Heart right ventricle (tissue), 16 donors: ENCODE measurements at regions of chr5 and their contacts with region 1.

Region 1: DNA sequence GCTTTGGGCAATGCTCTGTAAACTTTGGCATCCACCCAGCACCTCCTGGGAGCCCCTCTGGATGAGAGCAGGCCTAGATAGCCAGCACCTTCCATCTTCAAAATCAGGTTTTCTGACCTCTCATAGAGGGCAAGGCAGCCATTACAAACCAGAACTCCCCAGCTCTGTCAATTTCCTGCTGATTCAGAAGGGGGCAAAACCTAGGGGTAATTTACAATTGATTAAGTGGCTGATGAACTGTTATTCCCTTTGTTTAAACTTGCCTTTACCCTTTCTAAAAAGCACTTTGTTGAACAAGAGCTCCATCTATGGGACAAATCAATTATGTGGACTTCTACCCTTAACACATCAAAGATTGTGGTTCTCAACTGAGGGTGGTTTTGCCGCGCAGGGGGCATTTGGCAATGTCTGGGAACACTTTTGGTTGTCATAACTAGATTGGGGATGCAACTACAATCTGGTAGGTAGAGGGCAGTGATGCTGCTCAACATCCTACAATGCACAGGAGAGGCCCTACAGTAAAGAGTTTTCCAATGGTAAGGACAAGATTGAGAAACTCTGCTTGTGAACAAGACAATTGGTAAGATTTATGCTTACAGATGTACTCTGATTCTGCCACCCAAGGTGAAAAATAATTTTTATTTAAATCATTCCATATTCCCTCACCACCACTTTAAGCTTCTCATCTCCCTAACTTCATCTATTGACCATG is 184.1 kb downstream of the MARCHF11 start:
- DNase-seq: no peak
- ATAC-seq: peak; percentile 25 to 79 (median 60)
- H3K4me3 ChIP-seq: no peak overlapping the region
- H3K27ac ChIP-seq: no peak overlapping the region
- H3K4me1 ChIP-seq: peaks cover 0 to 10% (median 0%) of the 10 kb centered on the region in 9 donors
- H3K27me3 ChIP-seq: no peaks in the 10 kb centered on the region
- CTCF ChIP-seq: peak; percentile 35 to 77 (median 67)

Region 2: DNA sequence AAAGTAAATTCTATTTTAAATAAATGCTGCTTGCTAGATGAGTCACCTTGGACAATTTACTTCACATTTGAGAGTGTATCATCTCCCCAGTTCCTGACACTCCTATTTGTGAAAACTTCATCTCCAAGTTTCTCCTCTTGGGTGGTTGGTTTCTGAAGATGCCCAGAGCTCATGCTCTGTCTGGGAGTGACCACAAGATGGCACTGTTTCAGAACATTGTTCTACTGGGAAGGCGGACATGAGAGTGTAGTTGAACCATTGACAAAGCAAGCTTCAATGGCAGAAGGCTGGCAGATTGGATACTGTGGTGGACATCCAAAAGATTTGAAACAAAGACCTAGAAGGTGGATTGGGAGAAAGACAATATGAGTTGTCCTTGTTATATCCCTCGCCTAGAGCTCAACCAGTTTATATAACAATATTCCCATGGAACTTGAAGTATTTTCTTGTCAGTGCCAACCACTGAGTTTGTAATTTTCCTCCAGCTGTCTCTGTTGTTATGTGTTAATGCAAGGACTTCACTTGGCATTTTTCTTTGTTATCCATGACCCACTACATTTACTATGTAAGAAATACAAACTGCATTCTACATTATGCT is 889.6 kb before region 1 on chr5:
- intact Hi-C with region 1: loop called in 5 of 10 experiments (anchors 5 to 10 kb)
- DNase-seq: peak in 1 of 2 donors; percentile 45
- ATAC-seq: peak in 5 of 8 donors; percentile 52 to 70 (median 61)
- H3K4me3 ChIP-seq: no peak overlapping the region
- H3K27ac ChIP-seq: no peak overlapping the region
- H3K4me1 ChIP-seq: no peaks in the 10 kb centered on the region
- H3K27me3 ChIP-seq: no peaks in the 10 kb centered on the region
- CTCF ChIP-seq: peak; percentile 45 to 84 (median 75)

Region 3: GRCh38 chr5:15366676-15367391 is 628.7 kb before region 1 on chr5:
- intact Hi-C with region 1: loop called in 1 of 10 experiments (anchors 10 kb)
- DNase-seq: peak in 1 of 2 donors; percentile 18
- ATAC-seq: peak; percentile 77 to 93 (median 86)
- H3K4me3 ChIP-seq: peak overlapping the region in 4 of 10 donors; percentile 10 to 30 (median 12)
- H3K27ac ChIP-seq: peak overlapping the region in 9 of 10 donors; percentile 3 to 86 (median 60)
- H3K4me1 ChIP-seq: peaks cover 2 to 28% (median 21%) of the 10 kb centered on the region in 9 donors
- H3K27me3 ChIP-seq: no peaks in the 10 kb centered on the region
- CTCF ChIP-seq: no peak

Region 4: DNA sequence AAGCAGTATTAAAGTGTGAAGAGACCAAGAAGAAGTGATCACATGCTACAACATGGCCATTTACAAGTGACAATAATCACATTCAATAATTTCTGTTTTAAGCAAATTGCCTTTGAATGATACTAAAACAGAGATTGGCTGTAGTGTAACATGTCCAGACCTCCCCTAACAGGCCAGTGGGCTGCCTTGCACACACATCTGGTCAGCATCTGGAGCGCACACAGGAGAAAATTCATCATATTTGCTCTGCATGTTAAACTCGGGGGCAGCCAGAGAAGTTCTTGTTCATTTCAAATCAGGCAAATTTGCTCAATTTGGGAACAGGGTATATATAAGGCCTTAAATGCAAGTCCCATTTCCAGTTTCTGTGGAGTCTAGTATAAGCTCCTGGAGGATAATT is 606.6 kb before region 1 on chr5:
- intact Hi-C with region 1: loop called in 2 of 10 experiments (anchors 5 to 10 kb)
- DNase-seq: no peak
- ATAC-seq: peak in 3 of 8 donors; percentile 42 to 67 (median 54)
- H3K4me3 ChIP-seq: no peak overlapping the region
- H3K27ac ChIP-seq: no peak overlapping the region
- H3K4me1 ChIP-seq: no peaks in the 10 kb centered on the region
- H3K27me3 ChIP-seq: no peaks in the 10 kb centered on the region
- CTCF ChIP-seq: no peak

Region 5: DNA sequence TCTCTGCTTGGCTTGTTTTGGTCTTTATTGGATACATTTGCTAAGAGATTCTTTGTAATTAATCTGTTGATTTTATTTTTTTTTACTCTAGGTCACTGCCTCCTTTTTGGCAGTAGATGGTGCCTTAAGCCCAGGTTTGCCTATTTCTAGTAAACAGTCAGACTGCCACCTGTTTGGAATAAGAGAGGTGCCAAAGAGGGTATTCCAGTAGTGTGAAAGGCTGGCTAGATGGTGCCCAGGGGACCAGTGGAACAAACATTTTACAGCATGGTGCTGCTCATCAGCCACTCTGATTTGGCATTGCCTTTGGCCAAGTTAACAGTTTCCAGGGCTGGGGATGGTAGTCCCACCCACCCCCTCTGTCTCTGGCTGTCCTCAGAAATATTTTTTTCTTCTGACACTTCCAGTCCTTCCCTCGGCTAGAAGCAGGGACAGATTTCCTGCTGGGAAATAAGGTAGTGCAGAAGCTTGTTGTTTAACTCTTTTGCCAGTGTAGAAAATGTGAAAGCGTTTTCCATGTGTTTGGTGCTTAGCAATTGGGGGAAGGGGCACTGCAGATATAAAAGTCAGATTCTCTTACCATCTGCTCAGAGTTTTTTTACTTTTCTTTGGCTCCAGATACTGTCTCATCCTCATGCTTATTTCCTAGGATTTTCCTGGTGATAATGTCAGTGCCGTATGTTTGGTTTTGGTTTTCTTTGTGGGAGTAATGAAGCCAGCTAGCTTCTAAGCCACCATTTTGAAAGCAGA is 532.1 kb before region 1 on chr5:
- intact Hi-C with region 1: loop called in 8 of 10 experiments (anchors 5 to 10 kb)
- DNase-seq: no peak
- ATAC-seq: peak in 2 of 8 donors; percentile 33 to 42
- H3K4me3 ChIP-seq: no peak overlapping the region
- H3K27ac ChIP-seq: no peak overlapping the region
- H3K4me1 ChIP-seq: no peaks in the 10 kb centered on the region
- H3K27me3 ChIP-seq: no peaks in the 10 kb centered on the region
- CTCF ChIP-seq: peak in 8 of 9 donors; percentile 41 to 68 (median 52)

Region 6: DNA sequence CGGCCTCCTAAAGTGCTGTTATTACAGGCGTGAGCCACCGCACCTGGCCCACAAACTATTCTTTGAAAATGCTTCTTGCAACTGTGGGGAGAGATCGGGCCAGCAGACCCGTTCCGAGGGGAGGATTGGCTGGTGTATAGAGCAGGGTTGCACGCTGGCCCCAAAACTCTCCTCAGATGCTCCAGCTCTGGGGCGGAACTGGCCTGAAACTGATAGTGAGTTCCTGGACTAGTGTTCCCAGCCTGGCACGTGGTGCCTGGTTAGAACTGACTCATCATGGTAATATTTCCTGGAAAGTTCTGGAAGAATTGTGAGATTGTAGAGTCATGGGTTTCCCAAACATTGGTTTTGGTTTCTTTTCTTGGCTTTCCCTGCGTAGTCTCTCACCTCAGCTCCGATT is 375.0 kb before region 1 on chr5:
- intact Hi-C with region 1: no loop called
- DNase-seq: no peak
- ATAC-seq: peak in 7 of 8 donors; percentile 20 to 75 (median 48)
- H3K4me3 ChIP-seq: no peak overlapping the region
- H3K27ac ChIP-seq: peak overlapping the region in 2 of 10 donors; percentile 17 to 56
- H3K4me1 ChIP-seq: peaks cover 0 to 53% (median 21%) of the 10 kb centered on the region in 9 donors
- H3K27me3 ChIP-seq: no peaks in the 10 kb centered on the region
- CTCF ChIP-seq: no peak

Region 7: DNA sequence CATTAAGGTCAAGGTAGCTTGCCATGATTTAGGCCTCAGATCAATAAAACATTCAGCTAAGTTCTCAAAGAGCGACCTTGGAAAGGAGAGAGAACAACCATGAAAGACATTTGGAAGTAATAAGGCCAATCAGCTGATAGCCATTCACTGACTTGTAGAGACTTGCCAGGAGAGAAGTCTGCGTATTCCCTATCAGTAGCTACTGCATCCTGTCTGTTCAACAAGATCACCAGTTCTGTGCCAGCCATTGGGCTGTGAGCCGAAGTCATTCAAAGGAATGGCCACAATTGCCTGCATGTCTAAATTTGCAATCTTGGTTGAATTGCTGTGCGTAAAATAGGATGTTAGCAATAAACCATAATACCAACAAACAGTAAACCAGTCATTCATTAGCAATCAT is 275.7 kb before region 1 on chr5:
- intact Hi-C with region 1: no loop called
- DNase-seq: no peak
- ATAC-seq: peak in 5 of 8 donors; percentile 34 to 70 (median 59)
- H3K4me3 ChIP-seq: no peak overlapping the region
- H3K27ac ChIP-seq: peak overlapping the region in 5 of 10 donors; percentile 19 to 53 (median 23)
- H3K4me1 ChIP-seq: peaks cover 0 to 60% (median 46%) of the 10 kb centered on the region in 9 donors
- H3K27me3 ChIP-seq: no peaks in the 10 kb centered on the region
- CTCF ChIP-seq: no peak

Region 8: GRCh38 chr5:16600397-16600796 is 604.9 kb after region 1 on chr5:
- intact Hi-C with region 1: no loop called
- DNase-seq: peak; percentile 61 to 84
- ATAC-seq: peak; percentile 60 to 85 (median 78)
- H3K4me3 ChIP-seq: no peak overlapping the region
- H3K27ac ChIP-seq: peak overlapping the region in 1 of 10 donors; percentile 25
- H3K4me1 ChIP-seq: peaks cover 0 to 33% (median 25%) of the 10 kb centered on the region in 9 donors
- H3K27me3 ChIP-seq: no peaks in the 10 kb centered on the region
- CTCF ChIP-seq: no peak